MCF 10A (cell line): ENCODE measurements at regions of chr12 and their contacts with region 1.

Region 1: DNA sequence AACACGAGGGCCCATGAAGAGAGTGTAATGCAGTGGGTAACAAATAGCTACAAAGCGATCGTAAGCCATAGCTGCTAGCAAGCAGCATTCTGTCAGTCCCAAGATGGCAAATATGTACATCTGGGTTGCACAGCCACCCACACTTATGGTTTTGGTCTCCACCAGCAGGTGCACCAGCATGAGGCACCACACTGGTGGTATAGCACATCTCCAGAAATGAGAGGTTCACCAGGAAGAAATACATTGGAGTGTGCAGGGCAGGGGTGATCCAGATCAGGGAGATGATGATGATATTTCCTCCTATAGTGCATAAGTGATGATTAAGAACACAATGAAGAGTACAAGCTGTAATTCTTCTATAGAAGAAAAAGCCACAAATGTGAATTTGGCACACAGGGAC is 26.4 kb upstream of the OR10A7 start:
- DNase-seq: no peak
- H3K4me3 Mint-ChIP-seq: no peak overlapping the region
- H3K27ac Mint-ChIP-seq: no peak overlapping the region
- H3K4me1 Mint-ChIP-seq: no peaks in the 10 kb centered on the region
- H3K27me3 Mint-ChIP-seq: peaks cover 85% of the 10 kb centered on the region
- CTCF ChIP-seq: no peak

Region 2: DNA sequence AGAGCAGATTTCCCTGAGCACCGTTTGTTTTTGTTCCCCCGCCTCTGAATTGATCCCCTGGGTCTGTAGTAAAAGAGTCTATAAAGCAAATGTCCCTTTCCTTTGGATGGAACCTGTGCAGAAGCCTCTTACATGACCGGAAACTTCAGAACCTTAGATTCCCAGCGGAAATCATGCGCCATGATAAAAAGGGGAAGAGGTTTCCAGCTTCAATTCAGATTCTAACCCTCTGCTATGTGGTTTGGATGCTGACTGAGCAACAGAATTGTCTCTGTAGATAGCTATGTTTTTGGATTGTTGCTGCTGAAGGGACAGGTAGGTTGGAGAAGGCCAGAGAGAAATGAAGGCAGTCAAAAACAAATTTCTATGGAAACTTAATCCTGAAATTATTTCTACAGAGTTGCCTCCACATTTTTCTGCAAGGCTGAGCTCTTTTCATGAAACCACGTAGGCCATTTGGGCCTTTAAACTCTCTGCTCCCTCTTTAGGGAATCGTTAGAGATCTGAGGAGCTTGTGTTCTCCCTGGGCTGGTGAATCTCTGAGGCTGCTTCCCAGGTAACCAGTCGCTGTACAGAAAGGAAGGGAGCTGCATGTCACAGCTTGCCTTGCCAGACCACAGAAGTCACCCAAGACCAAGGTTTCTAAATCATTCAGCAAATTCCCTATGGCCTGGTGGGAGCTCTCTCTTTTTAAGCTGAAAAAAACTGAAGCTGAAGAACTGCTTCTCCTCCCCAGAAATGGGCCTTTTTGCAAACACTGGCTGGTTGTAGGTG is 413.6 kb after region 1 on chr12:
- CTCF ChIA-PET with region 1: interaction called, 12 read pairs
- POLR2A ChIA-PET with region 1: no interaction called
- intact Hi-C with region 1: no loop called
- DNase-seq: peak; percentile 25
- H3K4me3 Mint-ChIP-seq: no peak overlapping the region
- H3K27ac Mint-ChIP-seq: no peak overlapping the region
- H3K4me1 Mint-ChIP-seq: no peaks in the 10 kb centered on the region
- H3K27me3 Mint-ChIP-seq: peaks cover 79% of the 10 kb centered on the region
- CTCF ChIP-seq: no peak